ENCODE measurements at regions of chr9 and their contacts with region 1.

Region 1: DNA sequence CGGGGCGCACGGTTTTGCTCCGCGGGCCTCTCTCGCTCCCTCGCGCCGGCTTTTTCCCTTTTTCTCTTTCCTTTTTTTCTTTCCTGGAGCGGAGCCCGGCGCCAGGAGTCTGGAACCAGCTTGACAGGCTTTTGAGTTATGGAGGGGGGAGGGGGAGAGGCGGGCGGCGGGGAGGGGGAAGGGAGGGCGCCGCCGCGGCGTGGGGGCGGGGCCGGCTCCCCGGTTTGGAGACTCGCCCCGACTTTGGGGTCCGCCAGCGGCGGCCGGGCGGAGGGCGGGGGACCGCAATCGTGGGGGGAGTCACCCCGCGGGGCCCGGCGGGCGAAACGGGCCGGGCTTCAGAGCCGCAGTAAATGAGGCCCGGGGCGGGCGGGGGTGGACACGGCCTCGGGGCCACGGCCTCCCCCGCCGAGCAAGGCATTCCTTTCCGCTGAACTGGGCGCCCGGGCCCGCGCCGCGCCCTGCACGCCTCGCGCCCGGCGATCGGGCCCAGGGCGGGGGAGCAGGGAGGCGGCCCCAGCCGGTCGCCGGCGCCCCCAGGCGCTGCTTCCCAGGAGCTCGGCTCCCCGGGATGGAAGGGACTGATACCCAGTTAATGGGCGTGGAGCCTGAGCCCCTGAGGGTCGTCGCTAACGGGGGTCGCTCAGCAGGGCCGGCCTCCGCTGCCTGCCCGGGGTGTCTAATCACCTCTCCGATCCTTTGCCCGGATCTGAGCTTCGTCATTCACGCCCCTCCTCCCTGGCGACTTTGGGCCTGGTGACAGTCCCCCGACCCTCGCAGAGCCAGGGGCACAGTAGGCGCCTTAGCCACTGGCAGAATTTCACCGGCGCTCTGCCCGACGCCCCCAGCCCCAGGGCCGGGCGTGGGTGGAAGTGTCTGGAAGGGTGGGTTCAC is 138.1 kb downstream of the C9orf50 start:
- DNase-seq: peak; percentile 88 to 93 (median 88)
- ATAC-seq: peak in 3 of 4 donors; percentile 43 to 74 (median 74)
- H3K4me3 ChIP-seq: peak overlapping the region; percentile 41 to 77 (median 66)
- H3K27ac ChIP-seq: peak overlapping the region; percentile 97 to 100 (median 99)
- H3K4me1 ChIP-seq: peaks cover 11 to 84% (median 64%) of the 10 kb centered on the region in 12 donors
- H3K27me3 ChIP-seq: no peaks in the 10 kb centered on the region
- CTCF ChIP-seq: peak in 4 of 12 donors; percentile 11 to 33 (median 20)
- POLR2A ChIP-seq: peak in 1 of 2 donors; percentile 32

Region 2: DNA sequence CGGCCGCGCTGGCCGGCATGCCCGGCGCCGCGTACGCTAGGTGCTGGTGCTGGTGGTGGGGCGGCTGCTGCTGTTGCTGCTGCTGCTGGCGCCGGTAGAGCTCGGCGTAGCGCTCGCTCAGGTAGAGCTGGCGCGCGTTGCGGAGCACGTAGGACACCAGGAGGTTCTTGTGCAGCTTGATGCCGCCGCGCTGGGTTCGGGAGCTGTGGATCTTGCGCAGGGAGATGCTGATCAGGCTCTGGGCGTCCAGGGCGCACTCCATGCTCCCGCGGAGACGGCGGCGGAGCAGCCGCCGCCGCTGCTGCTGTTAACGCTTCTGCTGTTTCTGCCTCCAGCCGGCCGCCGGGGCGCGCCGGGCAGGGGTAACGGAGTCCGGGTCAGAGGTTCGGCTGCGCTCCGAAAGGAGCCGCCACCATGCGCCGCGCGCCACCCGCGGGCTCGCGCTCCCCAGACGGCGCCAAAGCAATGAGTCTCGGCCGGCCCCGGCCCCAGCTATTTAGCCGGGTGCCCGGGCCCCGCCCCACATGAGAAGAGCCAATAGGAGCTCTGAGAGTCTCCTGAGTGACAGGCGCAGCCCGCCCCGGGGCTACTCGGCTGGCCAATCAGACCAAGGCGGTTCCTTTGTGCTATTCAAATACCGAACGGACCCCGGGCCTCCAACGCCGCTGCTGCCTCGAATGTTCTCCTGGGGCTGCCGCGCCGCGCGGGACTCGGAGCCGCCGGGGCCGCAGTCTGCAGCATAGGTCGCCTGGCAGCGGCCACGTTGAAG is 304.8 kb before region 1 on chr9 and contains the start of gene IER5L:
- intact Hi-C with region 1: loop called in 7 of 10 experiments (anchors 2 to 10 kb)
- DNase-seq: peak; percentile 94 to 98 (median 97)
- ATAC-seq: peak; percentile 85 to 90 (median 89)
- H3K4me3 ChIP-seq: peak within 1 kb of the TSS; percentile 77 to 99 (median 95)
- H3K27ac ChIP-seq: peak within 1 kb of the TSS; percentile 81 to 100 (median 99)
- H3K4me1 ChIP-seq: peaks cover 3 to 43% (median 25%) of the 10 kb centered on the region in 12 donors
- H3K27me3 ChIP-seq: no peaks in the 10 kb centered on the region
- CTCF ChIP-seq: no peak
- POLR2A ChIP-seq: peak; percentile 90 to 99
- total RNA-seq, gene IER5L: 4.1 to 18.4 (median 5.5) TPM

Region 3: DNA sequence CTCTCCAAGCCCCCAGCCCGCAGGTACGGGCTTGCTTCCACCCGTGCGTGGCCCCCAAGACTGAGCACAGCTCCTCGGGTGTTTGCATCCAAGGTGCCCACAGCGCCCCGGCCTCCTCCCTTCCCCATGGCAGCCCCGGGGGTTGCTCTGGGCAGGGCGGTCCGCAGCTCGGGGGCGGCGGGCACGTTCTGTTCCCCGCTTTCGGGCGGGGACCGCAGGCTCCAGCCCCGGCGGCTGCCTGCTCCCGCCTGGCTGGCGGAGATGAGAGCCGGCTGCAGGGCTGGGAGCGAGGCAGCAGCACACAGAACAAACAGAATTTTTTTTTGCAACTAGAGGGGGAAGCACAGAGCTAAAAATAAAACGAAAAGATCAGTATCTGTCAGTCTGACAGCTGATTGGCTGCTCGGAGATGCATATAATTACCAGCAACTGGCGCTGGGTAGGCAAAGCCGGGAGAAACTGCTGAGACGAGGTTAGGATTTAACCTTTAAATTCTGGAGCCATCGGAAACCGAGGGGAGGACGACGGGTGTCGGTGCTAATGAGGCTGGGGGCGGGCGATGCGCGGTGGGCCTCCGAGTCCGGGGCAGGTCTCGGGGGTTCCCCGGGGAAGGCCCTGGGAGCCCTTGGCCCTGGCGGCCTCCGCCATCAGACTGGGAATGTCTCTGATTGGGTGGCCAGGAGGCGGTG is 162.0 kb before region 1 on chr9:
- intact Hi-C with region 1: loop called in 3 of 10 experiments (anchors 5 kb)
- DNase-seq: peak in 4 of 5 donors; percentile 72 to 77 (median 74)
- ATAC-seq: peak; percentile 70 to 86 (median 82)
- H3K4me3 ChIP-seq: peak overlapping the region in 11 of 12 donors; percentile 33 to 77 (median 55)
- H3K27ac ChIP-seq: peak overlapping the region; percentile 78 to 97 (median 92)
- H3K4me1 ChIP-seq: peaks cover 8 to 82% (median 61%) of the 10 kb centered on the region in 12 donors
- H3K27me3 ChIP-seq: no peaks in the 10 kb centered on the region
- CTCF ChIP-seq: peak in 7 of 12 donors; percentile 18 to 50 (median 27)
- POLR2A ChIP-seq: peak in 1 of 2 donors; percentile 83

Region 4: GRCh38 chr9:129383561-129384416 is 99.0 kb before region 1 on chr9:
- intact Hi-C with region 1: loop called in 1 of 10 experiments (anchors 1 kb)
- DNase-seq: peak; percentile 85 to 92 (median 87)
- ATAC-seq: peak; percentile 68 to 92 (median 89)
- H3K4me3 ChIP-seq: peak overlapping the region; percentile 15 to 78 (median 64)
- H3K27ac ChIP-seq: peak overlapping the region; percentile 90 to 98 (median 96)
- H3K4me1 ChIP-seq: peaks cover 0 to 25% (median 15%) of the 10 kb centered on the region in 12 donors
- H3K27me3 ChIP-seq: no peaks in the 10 kb centered on the region
- CTCF ChIP-seq: peak in 5 of 12 donors; percentile 26 to 47 (median 35)
- POLR2A ChIP-seq: peak in 1 of 2 donors; percentile 41

Region 5: DNA sequence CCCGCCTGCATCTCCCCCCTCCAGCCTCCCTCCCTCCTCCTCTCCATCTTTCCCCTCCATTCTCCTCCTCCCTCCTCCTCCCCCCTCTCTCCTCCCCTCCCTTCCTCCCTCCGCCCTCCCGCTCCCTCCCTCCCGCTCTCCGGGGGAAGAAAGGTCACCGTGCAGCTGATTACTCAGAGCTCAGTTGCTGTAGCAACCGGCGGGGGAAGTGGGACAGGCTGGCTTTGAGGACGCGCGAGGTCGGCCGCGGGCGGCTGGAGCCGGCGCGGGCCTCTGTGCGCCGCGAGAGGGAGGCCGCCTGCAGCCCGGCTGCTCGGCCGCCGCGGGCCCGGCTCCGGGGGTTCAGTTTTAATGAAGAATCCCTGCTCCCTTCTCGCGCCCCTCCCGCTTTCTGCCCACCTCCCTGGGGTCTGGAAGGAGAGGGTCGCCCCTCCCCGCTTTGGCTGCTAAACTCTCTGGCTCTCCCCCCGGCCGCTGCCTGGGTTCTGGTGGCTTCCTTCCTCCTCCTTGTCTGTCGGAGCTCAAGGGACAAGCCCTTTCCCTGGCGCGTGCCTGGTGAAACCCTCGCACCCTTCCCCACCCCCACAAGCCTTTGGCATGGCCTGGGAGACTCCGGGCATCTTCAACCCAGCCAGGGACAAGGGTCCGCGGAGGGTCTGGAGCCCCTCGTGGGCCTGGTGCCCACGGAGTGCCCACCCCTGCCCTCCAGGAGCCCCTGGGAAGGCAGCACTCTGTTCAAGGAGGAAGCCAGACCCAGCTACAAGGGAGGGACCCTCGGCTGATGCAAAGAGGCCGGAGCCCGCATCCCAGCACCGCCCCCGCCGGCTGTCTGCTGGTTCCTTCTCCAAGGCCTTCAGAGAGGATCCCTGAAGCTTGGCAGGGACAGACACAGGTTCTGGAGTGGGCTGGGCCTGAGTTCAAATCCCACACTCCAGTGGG is 22.2 kb before region 1 on chr9:
- intact Hi-C with region 1: loop called in 6 of 10 experiments (anchors 1 to 2 kb)
- DNase-seq: peak; percentile 97 to 99 (median 98)
- ATAC-seq: peak; percentile 86 to 94 (median 92)
- H3K4me3 ChIP-seq: peak overlapping the region; percentile 16 to 60 (median 51)
- H3K27ac ChIP-seq: peak overlapping the region; percentile 91 to 100 (median 98)
- H3K4me1 ChIP-seq: peaks cover 9 to 52% (median 43%) of the 10 kb centered on the region in 12 donors
- H3K27me3 ChIP-seq: no peaks in the 10 kb centered on the region
- CTCF ChIP-seq: peak in 8 of 12 donors; percentile 5 to 51 (median 28)
- POLR2A ChIP-seq: peak; percentile 39 to 79